ENCODE measurements at regions of chr6 and their contacts with region 1.

Region 1: GRCh38 chr6:42338663-42339218 is 113.0 kb downstream of the TRERF1 start:
- DNase-seq: no peak

Region 2: GRCh38 chr6:42367353-42368011 is 28.7 kb after region 1 on chr6:
- intact Hi-C with region 1: loop called in 1 of 2 experiments (anchors 1 kb)
- DNase-seq: no peak

Region 3: GRCh38 chr6:42511803-42512422 is 173.2 kb after region 1 on chr6:
- intact Hi-C with region 1: no loop called
- DNase-seq: no peak

Measured in posterior vena cava (tissue), 2 donors.